ENCODE measurements at regions of chr15 and their contacts with region 1.

Region 1: GRCh38 chr15:64893481-64894394 is 18.0 kb upstream of the ANKDD1A start:
- DNase-seq: peak; percentile 99
- H3K4me3 Mint-ChIP-seq: peak overlapping the region; percentile 98
- H3K27ac Mint-ChIP-seq: peak overlapping the region; percentile 99
- H3K4me1 Mint-ChIP-seq: peaks cover 62% of the 10 kb centered on the region
- H3K27me3 Mint-ChIP-seq: no peaks in the 10 kb centered on the region

Region 2: GRCh38 chr15:64162870-64163658 is 730.7 kb before region 1 on chr15 and contains the start of gene PPIB:
- CTCF ChIA-PET with region 1: no interaction called
- intact Hi-C with region 1: loop called (anchors 2 kb)
- DNase-seq: peak; percentile 98
- H3K4me3 Mint-ChIP-seq: peak within 1 kb of the TSS; percentile 80
- H3K27ac Mint-ChIP-seq: peak within 1 kb of the TSS; percentile 86
- H3K4me1 Mint-ChIP-seq: peaks cover 42% of the 10 kb centered on the region
- H3K27me3 Mint-ChIP-seq: no peaks in the 10 kb centered on the region
- total RNA-seq, gene PPIB: 187 to 202 TPM

Region 3: GRCh38 chr15:64622410-64623260 is 271.1 kb before region 1 on chr15:
- CTCF ChIA-PET with region 1: no interaction called
- intact Hi-C with region 1: loop called (anchors 1 kb)
- DNase-seq: peak; percentile 71
- H3K4me3 Mint-ChIP-seq: peak overlapping the region; percentile 59
- H3K27ac Mint-ChIP-seq: peak overlapping the region; percentile 96
- H3K4me1 Mint-ChIP-seq: peaks cover 95% of the 10 kb centered on the region
- H3K27me3 Mint-ChIP-seq: no peaks in the 10 kb centered on the region

Region 4: DNA sequence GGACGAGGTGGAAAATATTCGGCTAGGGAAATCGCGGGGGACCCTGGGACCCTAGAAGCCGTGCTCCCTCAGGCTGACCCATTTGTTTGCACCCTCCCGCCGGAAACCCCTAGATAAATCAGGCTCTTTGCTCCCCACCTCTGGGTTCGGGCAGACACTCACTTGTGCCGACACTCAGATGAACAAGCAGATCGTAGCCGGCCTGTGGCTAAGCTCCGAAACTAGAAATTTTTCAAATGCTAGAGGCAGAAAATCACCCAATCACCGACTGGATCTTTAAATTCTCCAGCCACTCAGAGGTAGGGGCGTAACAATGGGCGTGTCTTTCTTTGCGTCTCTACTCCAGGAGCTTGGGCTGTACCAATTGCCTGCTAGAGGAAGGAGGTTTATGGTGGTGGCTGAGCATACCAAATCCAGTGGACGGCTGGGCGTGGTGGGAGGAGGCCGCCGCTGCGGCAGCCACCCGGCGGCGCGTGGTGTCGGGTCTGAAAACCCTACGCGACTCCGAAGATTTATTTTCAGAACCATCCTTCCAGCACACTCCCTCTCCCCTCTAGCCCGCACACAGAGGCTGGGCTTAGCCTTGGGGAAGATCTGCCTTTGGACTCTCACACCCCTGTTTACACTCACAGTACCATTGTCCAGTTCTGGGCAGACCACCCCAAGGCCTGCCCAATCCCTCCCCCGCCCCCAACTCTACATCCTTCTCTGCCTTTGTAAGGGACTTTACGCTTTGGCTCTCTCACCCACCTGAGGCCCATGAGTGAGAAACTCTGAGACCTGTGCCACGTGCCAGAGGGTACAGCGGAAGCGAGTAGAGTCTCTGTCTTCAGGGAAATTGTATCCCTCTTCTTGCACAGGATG is 68.1 kb before region 1 on chr15 and contains the start of gene PIF1:
- CTCF ChIA-PET with region 1: interaction called, 4 read pairs
- intact Hi-C with region 1: loop called (anchors 1 kb)
- DNase-seq: peak; percentile 95
- H3K4me3 Mint-ChIP-seq: peak within 1 kb of the TSS; percentile 84
- H3K27ac Mint-ChIP-seq: peak within 1 kb of the TSS; percentile 81
- H3K4me1 Mint-ChIP-seq: peaks cover 20% of the 10 kb centered on the region
- H3K27me3 Mint-ChIP-seq: peaks cover 8% of the 10 kb centered on the region
- total RNA-seq, gene PIF1: 38.4 to 43.9 TPM

Region 5: DNA sequence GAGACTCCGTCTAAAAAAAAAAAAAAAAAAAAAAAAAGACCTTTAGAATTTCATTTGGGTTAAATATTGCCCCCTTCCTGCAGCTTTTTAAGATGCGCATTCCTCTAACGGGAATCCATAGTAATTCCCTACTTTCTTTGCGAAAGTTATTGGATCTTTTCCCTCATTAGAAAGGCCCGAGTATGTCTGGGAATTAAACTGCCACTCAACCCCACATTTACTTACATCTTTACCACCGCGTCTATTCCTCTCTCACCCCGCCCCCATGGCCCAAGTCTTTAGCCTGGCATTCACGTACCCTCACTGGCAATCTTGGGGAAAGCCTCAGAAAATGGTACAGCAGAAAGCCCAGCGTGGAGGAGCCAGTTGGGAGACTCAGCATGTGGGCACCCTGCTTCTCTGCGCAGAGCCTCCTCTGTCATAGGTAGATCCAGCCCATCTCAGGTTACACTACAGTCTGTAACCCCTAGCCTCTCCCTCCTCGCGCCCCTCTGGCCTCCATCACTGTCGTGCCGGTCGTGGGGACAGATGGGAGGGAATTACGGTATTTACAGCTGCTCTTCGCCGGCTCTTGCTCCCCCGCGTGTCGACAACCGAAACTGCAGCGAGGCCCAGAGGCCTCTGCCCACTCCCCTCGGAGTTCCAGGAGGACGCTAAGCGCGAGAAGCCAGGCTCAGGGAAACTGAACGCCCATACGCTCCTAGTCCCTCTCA is 11.5 kb after region 1 on chr15:
- CTCF ChIA-PET with region 1: interaction called, 22 read pairs
- intact Hi-C with region 1: loop called (anchors 1 kb)
- DNase-seq: peak; percentile 89
- H3K4me3 Mint-ChIP-seq: peak overlapping the region; percentile 64
- H3K27ac Mint-ChIP-seq: peak overlapping the region; percentile 51
- H3K4me1 Mint-ChIP-seq: peaks cover 35% of the 10 kb centered on the region
- H3K27me3 Mint-ChIP-seq: no peaks in the 10 kb centered on the region

Region 6: DNA sequence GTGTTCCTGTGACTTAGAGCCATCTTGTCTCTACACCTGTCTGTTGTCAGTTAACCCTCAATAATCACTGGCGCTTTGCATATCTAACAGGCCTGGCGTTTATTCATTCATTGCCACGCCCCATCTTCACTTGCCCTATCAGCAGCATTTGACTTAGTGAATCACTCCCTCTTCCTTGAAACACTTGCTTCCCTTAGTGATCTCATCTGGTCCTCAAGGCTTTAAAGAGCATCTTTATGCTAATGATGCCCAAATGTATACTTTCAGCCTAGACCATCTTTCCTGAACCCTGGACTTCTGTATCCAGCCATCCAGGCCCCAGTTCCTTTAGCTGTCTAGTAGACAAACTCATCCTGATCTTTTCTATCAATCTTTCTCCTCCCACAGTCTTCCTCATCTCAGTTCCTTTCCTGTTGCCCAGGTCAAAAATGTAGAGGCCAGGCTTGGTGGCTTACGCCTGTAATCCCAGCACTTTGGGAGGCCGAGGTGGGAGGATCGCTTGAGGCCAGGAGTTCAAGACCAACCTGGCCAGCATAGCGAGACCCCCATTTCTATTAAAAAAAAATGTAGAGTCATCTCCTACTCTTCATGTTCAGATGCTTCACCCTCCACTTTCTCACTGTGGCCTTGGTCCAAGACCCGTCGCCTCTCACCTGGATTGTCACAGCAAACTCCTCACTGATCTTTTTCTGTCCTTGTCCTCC is 530.4 kb after region 1 on chr15:
- CTCF ChIA-PET with region 1: no interaction called
- intact Hi-C with region 1: no loop called
- DNase-seq: no peak
- H3K4me3 Mint-ChIP-seq: no peak overlapping the region
- H3K27ac Mint-ChIP-seq: no peak overlapping the region
- H3K4me1 Mint-ChIP-seq: peaks cover 11% of the 10 kb centered on the region
- H3K27me3 Mint-ChIP-seq: peaks cover 57% of the 10 kb centered on the region

Measured in activated naive CD4-positive, alpha-beta T cell treated with anti-CD3 and anti-CD28 coated beads for 36 hours (primary cell).